ENCODE measurements at regions of chr3 and their contacts with region 1.

Region 1: DNA sequence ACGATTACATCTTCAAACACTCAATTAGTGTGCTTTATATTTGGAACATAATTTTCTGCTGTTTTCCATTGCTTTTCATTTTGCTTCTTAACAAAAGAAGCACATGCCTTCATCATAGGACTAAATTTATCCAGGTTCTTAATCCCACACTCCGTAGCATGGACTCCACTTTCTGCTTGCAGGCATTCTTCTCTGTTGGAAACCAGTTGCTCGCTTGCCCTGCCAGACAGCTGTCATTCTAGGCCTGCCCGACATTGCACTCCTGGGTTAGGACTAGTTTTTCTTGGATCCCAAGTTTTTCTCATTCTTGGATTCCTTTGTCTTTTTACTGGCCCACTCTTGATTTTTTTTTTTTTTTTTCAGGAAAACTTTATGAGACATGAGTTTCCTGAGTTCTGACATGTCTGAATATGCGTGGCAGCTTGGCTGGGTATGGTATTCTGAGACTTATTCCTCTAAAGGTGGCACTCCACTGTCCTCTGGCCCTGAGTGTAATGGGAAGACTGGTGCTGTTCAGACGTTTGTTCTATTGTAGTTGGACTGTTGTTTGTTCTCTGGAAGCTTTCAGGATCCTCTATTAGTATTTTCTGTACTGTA is 6.3 kb upstream of the ATP1B3 start:
- DNase-seq: no peak
- H3K4me3 ChIP-seq: no peak overlapping the region
- H3K27ac ChIP-seq: no peak overlapping the region
- H3K4me1 ChIP-seq: peaks cover 3 to 6% (median 5%) of the 10 kb centered on the region in 4 donors
- H3K27me3 ChIP-seq: no peaks in the 10 kb centered on the region
- CTCF ChIP-seq: no peak
- EP300 ChIP-seq: no peak
- POLR2A ChIP-seq: no peak

Region 2: DNA sequence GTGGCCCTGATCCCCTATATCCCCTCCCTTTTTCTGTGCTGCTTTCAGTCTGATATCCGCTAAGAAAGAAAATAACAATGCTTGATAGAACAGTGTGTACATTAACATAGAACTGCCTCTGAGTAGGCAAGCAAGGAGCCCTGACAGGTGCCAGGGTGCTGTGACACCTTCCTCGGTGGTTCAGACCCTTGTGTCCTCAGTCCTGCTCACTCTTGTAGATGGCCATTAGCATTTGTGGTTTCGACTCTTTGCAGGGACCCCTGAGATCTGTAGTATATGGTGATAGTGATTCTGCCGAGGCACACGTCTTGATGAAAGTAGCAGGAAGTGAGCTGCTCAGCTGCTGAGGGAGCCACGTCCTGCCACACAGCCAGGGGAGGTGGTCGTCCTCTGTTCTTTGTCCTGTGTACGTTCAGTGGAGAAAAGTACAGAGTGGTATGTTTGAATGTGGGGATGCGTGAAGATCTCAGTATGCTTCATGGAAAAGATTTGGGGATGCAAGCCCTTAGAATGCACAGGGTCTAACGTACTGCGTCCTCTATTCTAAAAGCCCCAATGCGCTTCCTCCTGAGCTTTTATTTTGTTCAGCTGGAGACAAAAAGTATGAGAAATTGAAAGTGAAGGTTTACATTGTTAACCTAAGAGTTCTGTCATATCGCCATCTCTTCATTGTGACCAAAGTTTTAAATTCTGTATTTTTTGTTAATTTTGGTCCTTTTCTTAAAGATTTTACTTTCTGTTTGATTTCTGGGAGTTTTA is 603.2 kb before region 1 on chr3:
- intact Hi-C with region 1: no loop called
- DNase-seq: no peak
- H3K4me3 ChIP-seq: peak overlapping the region in 3 of 4 donors; percentile 19 to 36 (median 27)
- H3K27ac ChIP-seq: no peak overlapping the region
- H3K4me1 ChIP-seq: peaks cover 5 to 7% (median 6%) of the 10 kb centered on the region in 4 donors
- H3K27me3 ChIP-seq: no peaks in the 10 kb centered on the region
- CTCF ChIP-seq: no peak
- EP300 ChIP-seq: no peak
- POLR2A ChIP-seq: no peak

Region 3: GRCh38 chr3:141793476-141794260 is 76.5 kb before region 1 on chr3:
- intact Hi-C with region 1: loop called (anchors 5 kb)
- DNase-seq: no peak
- H3K4me3 ChIP-seq: no peak overlapping the region
- H3K27ac ChIP-seq: no peak overlapping the region
- H3K4me1 ChIP-seq: peaks cover 24 to 27% (median 25%) of the 10 kb centered on the region in 4 donors
- H3K27me3 ChIP-seq: no peaks in the 10 kb centered on the region
- CTCF ChIP-seq: no peak
- EP300 ChIP-seq: no peak
- POLR2A ChIP-seq: no peak

Region 4: GRCh38 chr3:141972399-141972798 is 102.2 kb after region 1 on chr3:
- intact Hi-C with region 1: no loop called
- DNase-seq: no peak
- H3K4me3 ChIP-seq: no peak overlapping the region
- H3K27ac ChIP-seq: no peak overlapping the region
- H3K4me1 ChIP-seq: no peaks in the 10 kb centered on the region
- H3K27me3 ChIP-seq: no peaks in the 10 kb centered on the region
- CTCF ChIP-seq: no peak
- EP300 ChIP-seq: no peak
- POLR2A ChIP-seq: no peak

Region 5: DNA sequence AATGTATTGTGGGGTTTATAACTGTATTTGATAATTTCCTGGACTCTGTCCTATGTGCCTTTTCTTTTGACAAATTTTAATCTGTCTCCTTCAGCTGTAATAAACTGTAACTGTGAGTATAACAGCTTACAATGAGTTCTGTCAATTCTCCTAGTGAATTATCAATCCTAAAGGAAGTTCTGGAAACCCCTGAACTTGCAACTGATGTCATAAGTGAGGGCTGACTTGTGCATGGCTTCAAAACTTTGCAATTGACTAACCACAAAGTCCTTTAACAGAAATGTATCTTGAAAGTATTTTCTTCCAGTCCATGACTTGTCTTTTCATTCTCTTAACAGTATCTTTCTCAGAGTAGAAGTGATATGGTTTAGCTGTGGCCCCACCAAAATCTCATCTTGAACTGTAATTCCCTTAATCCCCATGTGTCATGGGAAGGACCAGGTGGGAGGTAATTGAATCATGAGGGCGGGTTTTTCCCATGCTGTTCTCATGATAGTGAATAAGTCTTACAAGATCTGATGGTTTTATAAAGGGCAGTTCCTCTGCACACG is 170.8 kb after region 1 on chr3:
- intact Hi-C with region 1: no loop called
- DNase-seq: no peak
- H3K4me3 ChIP-seq: no peak overlapping the region
- H3K27ac ChIP-seq: no peak overlapping the region
- H3K4me1 ChIP-seq: no peaks in the 10 kb centered on the region
- H3K27me3 ChIP-seq: peaks cover 0 to under 1% (median 0%) of the 10 kb centered on the region in 4 donors
- CTCF ChIP-seq: no peak
- EP300 ChIP-seq: no peak
- POLR2A ChIP-seq: no peak

Region 6: DNA sequence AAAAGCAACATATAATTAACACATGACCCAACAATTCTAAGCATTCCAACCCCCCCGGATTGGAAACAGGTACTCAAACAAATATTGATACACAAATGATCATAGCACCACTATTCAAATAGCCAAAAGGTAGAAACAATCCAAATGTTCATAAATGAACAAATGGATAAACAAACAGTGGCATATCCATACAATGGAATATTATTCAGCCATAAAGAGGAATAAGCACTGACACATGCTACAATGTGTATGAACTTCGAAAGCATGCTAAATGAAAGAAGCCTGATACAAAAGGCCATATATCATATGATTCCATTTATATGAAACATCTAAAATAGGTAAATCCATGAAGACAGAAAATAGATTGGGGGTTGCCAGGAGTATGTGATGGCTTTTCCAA is 514.9 kb after region 1 on chr3:
- intact Hi-C with region 1: no loop called
- DNase-seq: no peak
- H3K4me3 ChIP-seq: no peak overlapping the region
- H3K27ac ChIP-seq: no peak overlapping the region
- H3K4me1 ChIP-seq: no peaks in the 10 kb centered on the region
- H3K27me3 ChIP-seq: no peaks in the 10 kb centered on the region
- CTCF ChIP-seq: no peak
- EP300 ChIP-seq: no peak
- POLR2A ChIP-seq: no peak